ENCODE measurements at regions of chr11 and their contacts with region 1.

Region 1: DNA sequence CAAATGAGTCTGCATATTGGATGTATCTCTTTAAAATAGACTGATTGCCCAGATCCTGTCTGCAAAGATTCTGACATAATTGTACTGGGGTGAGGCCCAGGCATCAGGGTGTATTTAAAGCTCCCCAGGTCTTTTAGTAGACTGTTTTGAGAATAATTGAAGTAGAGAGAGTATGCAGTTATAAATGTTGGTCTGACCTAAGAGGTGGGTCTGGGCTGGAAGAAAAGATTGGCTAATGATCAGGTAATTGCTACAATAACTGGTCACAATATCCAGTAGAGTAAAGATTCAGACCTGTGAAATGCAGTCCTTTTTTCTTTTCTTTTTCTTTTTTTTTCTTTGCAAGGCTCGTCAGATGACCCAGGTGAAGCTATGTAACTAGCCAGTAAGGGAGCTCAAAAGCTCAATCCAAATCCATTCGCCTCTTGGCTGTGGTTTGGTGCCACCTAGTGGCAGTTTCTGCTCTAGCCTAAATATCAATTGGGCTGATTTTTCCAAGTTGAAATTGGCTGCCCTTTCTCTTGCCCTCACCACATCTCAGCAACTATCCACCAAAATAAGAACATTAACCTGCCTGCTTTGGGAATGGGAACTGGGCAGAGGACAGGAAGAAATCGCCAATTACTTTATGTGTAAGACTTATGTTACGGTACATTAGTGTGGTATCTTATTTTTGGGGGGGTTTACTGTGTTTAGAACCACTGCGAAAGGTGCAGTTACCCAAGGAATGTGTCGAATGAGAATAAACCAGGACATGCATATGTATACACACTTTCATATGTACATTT is 45.9 kb downstream of the ZNF143 start:
- DNase-seq: peak; percentile 84
- ATAC-seq: peak; percentile 95
- H3K4me3 Mint-ChIP-seq: peak overlapping the region; percentile 3; the same call in 1 of the 2 replicates
- H3K27ac Mint-ChIP-seq: peak overlapping the region; percentile 95
- H3K4me1 Mint-ChIP-seq: peaks cover 26% of the 10 kb centered on the region
- H3K27me3 Mint-ChIP-seq: no peaks in the 10 kb centered on the region
- CTCF ChIP-seq: peak; percentile 76

Region 2: GRCh38 chr11:9170450-9170849 is 336.2 kb before region 1 on chr11:
- CTCF ChIA-PET with region 1: interaction called, 10 read pairs
- POLR2A ChIA-PET with region 1: no interaction called
- DNase-seq: no peak
- ATAC-seq: no peak
- H3K4me3 Mint-ChIP-seq: no peak overlapping the region
- H3K27ac Mint-ChIP-seq: no peak overlapping the region
- H3K4me1 Mint-ChIP-seq: peaks cover 17% of the 10 kb centered on the region
- H3K27me3 Mint-ChIP-seq: no peaks in the 10 kb centered on the region
- CTCF ChIP-seq: no peak

Region 3: GRCh38 chr11:9473408-9473807 is 33.3 kb before region 1 on chr11:
- CTCF ChIA-PET with region 1: interaction called, 11 read pairs
- POLR2A ChIA-PET with region 1: no interaction called
- DNase-seq: no peak
- ATAC-seq: no peak
- H3K4me3 Mint-ChIP-seq: no peak overlapping the region
- H3K27ac Mint-ChIP-seq: no peak overlapping the region
- H3K4me1 Mint-ChIP-seq: no peaks in the 10 kb centered on the region
- H3K27me3 Mint-ChIP-seq: no peaks in the 10 kb centered on the region
- CTCF ChIP-seq: no peak

Region 4: DNA sequence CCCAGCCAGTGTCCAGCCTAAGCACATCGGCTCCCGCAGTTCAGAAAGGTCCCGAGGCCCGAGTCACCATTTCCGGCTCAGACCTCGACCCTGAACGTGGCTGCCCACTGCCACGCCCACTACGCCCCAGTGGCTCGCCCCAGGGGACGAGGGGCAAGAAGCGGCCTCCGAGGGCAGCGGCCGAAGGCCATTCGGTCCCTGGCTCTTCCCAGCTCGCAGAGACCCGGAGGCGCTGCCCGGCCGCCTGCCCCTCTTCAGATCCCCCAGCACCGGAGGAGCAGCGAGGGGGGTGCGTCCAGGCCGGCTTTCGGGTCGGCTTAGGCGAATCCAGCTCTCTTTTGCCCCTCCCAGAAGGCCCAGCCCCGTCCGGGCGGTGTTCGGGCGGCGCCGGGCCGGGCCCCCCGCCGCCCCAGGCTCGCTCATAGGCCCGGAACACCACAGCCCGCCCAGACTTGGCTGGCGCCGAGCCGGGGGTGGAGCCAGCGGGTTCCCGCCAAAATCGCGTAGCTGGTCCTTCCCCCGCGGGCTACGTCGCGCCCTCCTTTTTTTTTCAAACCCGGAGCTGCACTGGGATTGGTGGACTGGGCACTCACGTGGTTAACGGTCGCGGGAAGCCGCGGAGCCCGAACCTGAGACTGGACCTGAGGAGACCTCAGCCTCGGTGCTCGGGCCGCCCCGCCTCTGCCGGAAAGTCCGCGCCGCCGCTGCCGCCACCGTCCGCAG is 66.5 kb after region 1 on chr11 and contains the start of gene WEE1:
- CTCF ChIA-PET with region 1: interaction called, 13 read pairs
- POLR2A ChIA-PET with region 1: interaction called, 11 read pairs
- DNase-seq: peak; percentile 99
- ATAC-seq: peak; percentile 90
- H3K4me3 Mint-ChIP-seq: peak within 1 kb of the TSS; percentile 95
- H3K27ac Mint-ChIP-seq: peak within 1 kb of the TSS; percentile 95
- H3K4me1 Mint-ChIP-seq: peaks cover 64% of the 10 kb centered on the region
- H3K27me3 Mint-ChIP-seq: no peaks in the 10 kb centered on the region
- CTCF ChIP-seq: no peak
- total RNA-seq, gene WEE1: 85.5 to 109 TPM (median 91.3 TPM) in 3 replicates

Region 5: DNA sequence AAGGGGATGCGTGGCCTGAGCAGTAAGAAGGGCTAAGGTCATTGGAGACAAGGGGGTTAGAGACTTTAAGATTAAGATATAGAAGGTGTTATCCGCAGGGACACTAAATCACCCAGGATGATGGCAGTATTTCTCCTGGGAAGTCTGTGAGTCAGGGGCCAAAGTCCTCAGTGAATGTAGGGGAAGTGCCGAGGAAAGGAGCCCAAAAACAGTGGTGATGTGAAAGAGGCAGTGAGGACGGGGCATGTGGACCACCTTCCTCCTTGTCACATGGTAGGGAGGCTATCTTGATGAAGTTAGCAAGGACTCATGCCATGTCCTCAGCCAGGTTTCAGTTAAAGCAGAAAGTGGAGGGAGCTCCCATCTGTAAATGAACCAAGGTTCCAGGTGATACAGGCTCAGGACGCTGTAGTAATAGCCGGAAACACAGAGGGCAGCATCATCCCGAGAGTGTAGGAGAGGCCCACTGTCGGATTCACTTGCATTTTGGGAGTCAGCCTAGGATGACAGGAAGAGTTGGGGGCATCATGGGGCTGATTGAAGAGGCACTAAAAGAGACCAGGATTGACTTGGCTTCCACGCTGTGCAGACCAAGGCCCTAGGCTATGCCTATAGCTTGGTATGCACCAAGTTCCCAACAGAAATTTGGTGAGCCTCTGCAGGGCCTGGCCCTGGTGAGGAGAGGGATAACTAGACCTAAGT is 100.3 kb after region 1 on chr11:
- CTCF ChIA-PET with region 1: interaction called, 15 read pairs
- POLR2A ChIA-PET with region 1: no interaction called
- DNase-seq: peak; percentile 53
- ATAC-seq: peak; percentile 92
- H3K4me3 Mint-ChIP-seq: no peak overlapping the region
- H3K27ac Mint-ChIP-seq: 0 out of 2 replicates have a peak overlapping the region, but pooled peaks have one; percentile 6
- H3K4me1 Mint-ChIP-seq: peaks cover 32% of the 10 kb centered on the region
- H3K27me3 Mint-ChIP-seq: no peaks in the 10 kb centered on the region
- CTCF ChIP-seq: no peak

Region 6: GRCh38 chr11:9708544-9708943 is 201.9 kb after region 1 on chr11:
- CTCF ChIA-PET with region 1: no interaction called
- POLR2A ChIA-PET with region 1: no interaction called
- DNase-seq: no peak
- ATAC-seq: no peak
- H3K4me3 Mint-ChIP-seq: no peak overlapping the region
- H3K27ac Mint-ChIP-seq: no peak overlapping the region
- H3K4me1 Mint-ChIP-seq: peaks cover 24% of the 10 kb centered on the region
- H3K27me3 Mint-ChIP-seq: no peaks in the 10 kb centered on the region
- CTCF ChIP-seq: no peak